Activated CD4-positive, alpha-beta memory T cell treated with anti-CD3 and anti-CD28 coated beads for 36 hours (primary cell): ENCODE measurements at regions of chr22 and their contacts with region 1.

Region 1: DNA sequence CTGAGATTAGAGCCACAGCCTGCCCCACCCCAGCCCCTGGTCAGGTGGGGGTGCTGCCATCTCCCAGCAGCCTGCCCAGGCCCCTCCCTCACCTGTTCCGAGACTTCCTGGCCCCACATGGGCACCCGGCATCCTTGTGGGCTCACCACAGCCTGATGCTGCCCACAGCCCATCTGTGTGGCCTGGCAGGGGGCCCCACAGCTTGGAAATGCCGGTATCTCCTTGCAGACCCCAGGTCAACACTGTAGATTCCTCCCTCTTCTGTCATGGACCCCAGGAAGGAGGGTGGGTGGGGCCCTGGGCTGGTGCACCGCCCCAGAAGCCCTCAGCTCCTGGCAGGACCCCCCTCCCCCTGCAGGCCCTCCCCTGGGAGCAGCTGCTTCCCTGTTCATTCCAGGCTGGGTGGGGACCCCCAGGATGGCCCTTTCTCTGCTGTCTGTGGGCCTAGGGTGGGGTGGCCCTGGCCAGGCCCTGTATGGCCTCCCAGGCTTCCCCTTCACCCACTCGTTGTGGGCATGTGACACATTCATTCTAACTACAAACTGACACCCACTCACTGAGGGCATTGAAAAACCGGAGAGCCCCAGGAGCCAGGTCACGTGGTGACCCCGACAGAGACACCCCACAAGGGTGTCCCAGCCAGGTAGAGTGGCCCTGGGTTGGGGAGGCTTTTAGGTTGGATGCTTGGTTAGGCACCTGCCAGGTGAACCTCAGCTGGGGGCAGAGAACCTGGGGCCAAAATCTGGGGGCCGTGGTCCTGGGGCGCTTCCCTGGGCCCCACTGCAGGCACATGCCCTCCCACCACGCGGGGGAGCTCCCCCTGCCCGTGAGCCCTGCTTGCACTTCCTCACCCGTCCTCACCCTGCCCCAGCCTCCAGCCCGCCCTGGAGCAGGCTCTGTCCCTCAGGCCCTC is 44.1 kb upstream of the CCDC188 start:
- DNase-seq: no peak
- H3K4me3 Mint-ChIP-seq: no peak overlapping the region
- H3K27ac Mint-ChIP-seq: no peak overlapping the region
- H3K4me1 Mint-ChIP-seq: no peaks in the 10 kb centered on the region
- H3K27me3 Mint-ChIP-seq: no peaks in the 10 kb centered on the region

Region 2: DNA sequence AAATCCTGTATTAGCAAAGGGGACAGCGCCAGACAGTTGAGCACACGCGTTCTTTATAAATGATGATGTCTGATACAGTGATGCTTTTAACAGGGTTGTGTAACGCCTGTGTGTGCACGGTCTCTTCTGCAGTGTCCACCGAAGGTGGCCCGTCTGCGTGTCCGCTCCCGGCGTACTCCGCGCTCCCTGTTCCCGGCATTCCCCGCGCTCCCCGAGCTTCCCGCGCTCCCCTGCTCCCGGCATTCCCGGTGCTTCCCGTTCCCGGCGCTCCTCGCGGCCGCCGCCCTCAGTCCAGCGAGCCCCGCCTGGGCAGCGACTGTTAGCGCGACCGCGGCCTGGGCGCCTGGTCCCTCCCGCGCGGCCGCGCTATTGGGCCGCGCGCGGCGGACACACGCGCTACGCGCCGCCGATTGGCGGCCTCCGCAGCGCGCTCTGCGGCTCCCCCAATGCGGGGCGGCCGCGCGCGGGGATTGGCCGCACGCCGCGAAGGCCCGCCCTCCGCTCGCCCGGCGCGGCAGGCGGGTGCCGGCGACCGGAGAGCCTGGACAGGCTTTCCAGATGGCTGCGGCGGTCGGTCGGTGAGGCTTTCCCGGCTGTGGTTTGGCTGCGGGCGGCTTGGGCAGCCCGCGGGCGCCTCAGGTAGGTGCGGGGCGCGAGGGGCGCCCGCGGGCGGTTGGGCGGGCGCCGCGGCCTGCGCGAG is 115.0 kb before region 1 on chr22 and contains the start of gene DGCR8:
- CTCF ChIA-PET with region 1: no interaction called
- POLR2A ChIA-PET with region 1: no interaction called
- intact Hi-C with region 1: no loop called
- DNase-seq: peak; percentile 75
- H3K4me3 Mint-ChIP-seq: peak within 1 kb of the TSS; percentile 88
- H3K27ac Mint-ChIP-seq: peak within 1 kb of the TSS; percentile 79
- H3K4me1 Mint-ChIP-seq: peaks cover 37% of the 10 kb centered on the region
- H3K27me3 Mint-ChIP-seq: no peaks in the 10 kb centered on the region
- total RNA-seq, gene DGCR8: 33.4 to 34.3 TPM

Region 3: DNA sequence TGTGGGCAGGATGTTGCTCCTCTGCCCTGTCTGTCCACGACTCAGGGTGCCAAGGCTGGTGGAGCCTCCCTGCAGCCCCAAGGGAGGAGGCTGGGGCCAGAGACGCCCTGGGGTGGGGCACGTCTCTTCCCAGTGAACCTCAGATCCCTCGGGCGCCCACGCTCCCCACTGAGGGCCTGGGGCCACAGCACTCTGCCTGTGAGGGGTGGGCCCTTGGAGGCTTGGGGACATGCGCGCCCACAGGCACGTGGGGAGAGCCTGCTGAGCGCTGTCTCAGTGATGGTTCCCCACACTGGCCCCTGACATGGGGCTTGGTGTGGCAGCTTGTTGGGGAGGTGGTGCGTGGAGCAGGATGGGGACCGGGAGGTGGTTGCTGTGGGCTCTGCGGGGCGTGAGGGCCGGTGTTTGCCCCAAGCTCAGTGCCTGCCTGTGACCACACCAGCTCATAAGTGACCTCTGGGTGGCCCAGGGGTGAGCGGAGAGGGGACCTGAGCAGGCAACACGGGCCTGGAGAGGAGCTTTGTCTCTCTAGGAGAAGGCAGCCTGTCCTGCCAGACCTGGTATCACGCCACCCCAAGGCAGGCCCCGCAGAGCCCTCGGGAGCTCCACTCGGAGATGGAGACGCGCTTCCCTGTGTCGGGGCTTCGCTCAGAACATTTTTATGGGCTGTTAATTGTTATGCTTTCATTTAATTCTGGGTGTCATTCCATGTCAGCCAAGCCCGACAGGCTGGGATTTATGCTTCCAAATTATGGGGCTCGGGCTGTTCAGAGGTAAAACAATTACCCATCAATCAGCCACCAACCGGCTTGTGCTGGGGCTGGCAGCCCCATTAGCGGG is 16.6 kb before region 1 on chr22:
- CTCF ChIA-PET with region 1: no interaction called
- POLR2A ChIA-PET with region 1: no interaction called
- intact Hi-C with region 1: loop called (anchors 2 kb)
- DNase-seq: no peak
- H3K4me3 Mint-ChIP-seq: no peak overlapping the region
- H3K27ac Mint-ChIP-seq: no peak overlapping the region
- H3K4me1 Mint-ChIP-seq: no peaks in the 10 kb centered on the region
- H3K27me3 Mint-ChIP-seq: peaks cover 3% of the 10 kb centered on the region

Region 4: DNA sequence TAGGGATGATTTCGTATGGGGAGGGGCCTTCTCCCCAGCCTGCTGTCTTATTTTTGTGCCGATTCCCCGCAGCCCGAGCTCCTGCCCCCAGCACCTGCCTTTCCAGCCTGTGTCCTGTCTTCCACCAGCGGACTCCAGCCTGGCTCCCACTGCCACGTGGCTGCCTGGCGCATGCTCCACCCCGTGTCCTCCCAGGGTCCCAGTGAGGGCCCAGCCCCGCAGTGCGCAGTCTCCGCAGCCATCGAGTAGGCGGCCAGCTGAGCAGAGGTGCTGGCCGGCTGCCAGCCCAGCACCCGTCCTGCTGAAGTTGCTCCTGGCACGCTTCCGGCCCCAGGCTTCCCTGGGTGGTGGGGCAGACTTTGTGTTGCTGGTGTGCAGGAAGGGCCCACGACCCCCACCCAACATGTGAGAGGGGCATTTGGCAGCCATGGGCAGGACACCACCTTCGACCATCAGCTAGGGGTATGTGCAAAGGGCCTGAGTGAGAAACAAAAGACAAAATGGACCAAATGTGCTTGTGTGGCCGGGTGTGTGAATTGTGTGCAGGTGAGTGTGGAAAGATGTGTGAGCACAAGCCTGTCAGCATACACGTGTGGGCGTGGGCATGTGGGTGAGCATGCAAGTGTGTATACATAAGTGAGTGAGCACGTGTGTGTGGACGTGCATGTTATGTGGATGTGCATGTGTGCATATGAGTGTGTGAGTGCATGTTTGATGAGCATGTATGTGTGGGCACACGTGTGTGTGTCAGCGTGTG is 17.2 kb after region 1 on chr22:
- CTCF ChIA-PET with region 1: no interaction called
- POLR2A ChIA-PET with region 1: no interaction called
- intact Hi-C with region 1: no loop called
- DNase-seq: no peak
- H3K4me3 Mint-ChIP-seq: no peak overlapping the region
- H3K27ac Mint-ChIP-seq: no peak overlapping the region
- H3K4me1 Mint-ChIP-seq: peaks cover 16% of the 10 kb centered on the region
- H3K27me3 Mint-ChIP-seq: peaks cover 2% of the 10 kb centered on the region

Region 5: GRCh38 chr22:20238536-20238900 is 43.6 kb after region 1 on chr22:
- CTCF ChIA-PET with region 1: no interaction called
- POLR2A ChIA-PET with region 1: no interaction called
- intact Hi-C with region 1: no loop called
- DNase-seq: peak; percentile 76
- H3K4me3 Mint-ChIP-seq: no peak overlapping the region
- H3K27ac Mint-ChIP-seq: peak overlapping the region; percentile 65
- H3K4me1 Mint-ChIP-seq: peaks cover 20% of the 10 kb centered on the region
- H3K27me3 Mint-ChIP-seq: no peaks in the 10 kb centered on the region